ENCODE measurements at regions of chr1 and their contacts with region 1.

Region 1: DNA sequence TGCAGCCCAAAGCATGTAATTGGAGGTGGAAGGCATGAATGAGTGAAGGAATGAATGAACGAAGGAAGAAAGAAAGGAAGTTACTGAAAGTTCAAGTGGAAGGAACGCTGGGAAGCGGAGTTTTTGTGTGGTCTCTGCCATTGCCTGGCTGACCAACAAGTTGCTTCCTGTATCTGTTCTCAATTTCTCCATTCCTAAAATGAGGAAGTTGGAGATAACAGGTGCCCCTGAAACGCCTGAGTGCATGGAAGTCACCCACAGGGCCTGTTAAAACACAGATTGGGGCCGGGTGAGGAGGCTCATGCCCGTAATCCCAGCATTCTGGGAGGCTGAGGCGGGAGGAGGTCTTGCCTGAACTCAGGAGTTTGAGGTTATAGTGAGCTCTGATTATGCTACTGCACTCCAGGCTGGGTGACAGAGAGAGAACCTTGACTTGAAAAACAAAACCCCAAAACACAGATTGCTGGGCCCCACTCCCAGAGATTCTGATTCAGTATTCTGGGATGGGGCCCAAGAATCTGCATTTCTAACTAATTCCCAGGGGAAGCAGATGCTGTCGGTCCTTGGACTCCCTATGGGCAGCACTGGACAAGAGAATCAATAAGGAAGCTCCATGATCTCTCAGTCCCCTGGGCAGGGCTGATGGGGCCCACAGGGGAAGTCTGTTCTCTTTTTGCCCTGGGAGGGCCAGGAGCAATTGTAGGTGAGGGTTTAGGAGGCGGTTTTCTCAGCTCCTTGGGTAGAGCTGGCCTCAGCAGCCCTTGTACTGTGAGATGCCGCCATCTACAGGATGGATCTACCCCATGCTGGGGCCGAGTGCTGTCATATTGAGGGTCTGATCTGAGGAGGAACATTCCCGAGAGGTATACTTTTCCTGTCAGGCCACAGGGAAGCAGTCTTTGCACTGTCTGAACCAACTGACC is 3.3 kb upstream of the CNR2 start:
- DNase-seq: peak; percentile 85
- H3K4me3 ChIP-seq: no peak overlapping the region
- H3K27ac ChIP-seq: no peak overlapping the region
- H3K4me1 ChIP-seq: peaks cover 0 to 6% of the 10 kb centered on the region in 2 experiments; a peak in 1 of 4 replicates
- H3K27me3 ChIP-seq: no peaks in the 10 kb centered on the region
- CTCF ChIP-seq: peak; percentile 62
- EP300 ChIP-seq: no peak
- RAD21 ChIP-seq: peak; percentile 93

Region 2: GRCh38 chr1:23777979-23778814 is 138.3 kb before region 1 on chr1 and contains the start of gene PITHD1:
- CTCF ChIA-PET with region 1: interaction called, 17 read pairs
- POLR2A ChIA-PET with region 1: interaction called, 6 read pairs
- DNase-seq: peak; percentile 97
- H3K4me3 ChIP-seq: peak within 1 kb of the TSS; percentile 72 to 86
- H3K27ac ChIP-seq: peak within 1 kb of the TSS; percentile 81 to 90
- H3K4me1 ChIP-seq: peaks cover 12 to 21% of the 10 kb centered on the region in 2 experiments; a peak in 3 of 4 replicates
- H3K27me3 ChIP-seq: no peaks in the 10 kb centered on the region
- CTCF ChIP-seq: no peak
- EP300 ChIP-seq: no peak
- RAD21 ChIP-seq: no peak
- polyA plus RNA-seq, gene PITHD1: 36.3 and 41.8 TPM in 2 replicates

Region 3: DNA sequence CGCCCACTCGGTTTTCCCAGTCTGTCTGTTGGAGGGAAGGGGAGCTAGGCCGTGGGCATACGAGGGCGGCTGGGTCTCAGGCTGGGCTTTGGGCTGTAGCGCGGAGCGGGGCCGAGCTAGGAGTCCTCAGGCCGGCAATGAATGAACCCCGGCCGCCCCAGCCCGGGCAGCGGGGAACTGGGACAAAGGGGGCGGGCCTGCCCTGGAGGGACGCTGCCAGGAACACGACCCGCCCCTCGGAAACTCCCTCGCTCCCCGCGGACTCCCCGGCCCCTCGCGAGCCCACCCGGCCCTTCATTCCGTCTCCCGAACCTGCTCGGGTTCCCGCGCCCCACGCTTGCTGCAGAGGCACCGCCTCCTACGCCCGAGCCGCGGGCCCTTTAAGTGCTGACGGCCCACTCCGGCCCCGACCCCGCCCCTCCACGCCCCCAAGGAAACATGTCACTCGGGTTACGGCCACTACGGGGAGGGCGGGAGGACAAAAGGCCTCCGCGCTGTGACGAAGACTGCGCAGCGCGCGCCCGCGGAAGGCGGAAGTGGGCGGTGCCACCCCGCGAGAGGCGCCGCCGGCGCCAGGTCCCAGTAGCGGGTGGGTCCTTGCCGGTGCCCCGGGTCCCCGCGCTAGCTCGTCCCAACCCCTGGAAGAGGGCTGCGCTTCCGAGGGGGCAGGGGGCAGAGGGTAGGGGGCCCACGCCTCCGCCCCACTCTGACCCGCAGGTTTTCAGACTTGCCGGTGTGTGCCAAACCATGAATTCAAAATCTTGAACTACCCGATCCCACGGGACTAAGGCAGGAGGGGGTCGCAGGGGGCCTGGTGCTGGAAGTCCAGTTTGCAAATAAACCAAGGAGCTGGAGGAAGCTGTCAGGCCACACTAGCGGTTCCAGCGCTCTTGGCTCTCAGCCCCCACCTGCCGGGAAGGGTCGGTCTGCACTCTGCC is 115.8 kb before region 1 on chr1 and contains the start of gene GALE:
- CTCF ChIA-PET with region 1: interaction called, 26 read pairs
- POLR2A ChIA-PET with region 1: interaction called, 3 read pairs
- DNase-seq: peak; percentile 99
- H3K4me3 ChIP-seq: peak within 1 kb of the TSS; percentile 71 to 89
- H3K27ac ChIP-seq: peak within 1 kb of the TSS; percentile 73 to 89
- H3K4me1 ChIP-seq: peaks cover 5 to 30% of the 10 kb centered on the region in 2 experiments; a peak in 1 of 4 replicates
- H3K27me3 ChIP-seq: no peaks in the 10 kb centered on the region
- CTCF ChIP-seq: no peak
- EP300 ChIP-seq: 0 out of 4 replicates have a peak, but pooled peaks of 1 of the 2 experiments have one; percentile 9
- RAD21 ChIP-seq: no peak
- polyA plus RNA-seq, gene GALE: 71.7 and 76.0 TPM in 2 replicates

Region 4: GRCh38 chr1:23816906-23817305 is 99.6 kb before region 1 on chr1:
- CTCF ChIA-PET with region 1: interaction called, 41 read pairs
- POLR2A ChIA-PET with region 1: no interaction called
- DNase-seq: no peak
- H3K4me3 ChIP-seq: no peak overlapping the region
- H3K27ac ChIP-seq: no peak overlapping the region
- H3K4me1 ChIP-seq: no peaks in the 10 kb centered on the region
- H3K27me3 ChIP-seq: no peaks in the 10 kb centered on the region
- CTCF ChIP-seq: no peak
- EP300 ChIP-seq: no peak
- RAD21 ChIP-seq: no peak

Region 5: GRCh38 chr1:23957096-23957495 is 40.6 kb after region 1 on chr1:
- CTCF ChIA-PET with region 1: interaction called, 11 read pairs
- POLR2A ChIA-PET with region 1: no interaction called
- DNase-seq: peak; percentile 65
- H3K4me3 ChIP-seq: no peak overlapping the region
- H3K27ac ChIP-seq: peak overlapping the region in 1 of 2 experiments; percentile 55; a peak in 2 of 4 replicates
- H3K4me1 ChIP-seq: peaks cover 9 to 12% of the 10 kb centered on the region in 2 experiments; a peak in 3 of 4 replicates
- H3K27me3 ChIP-seq: no peaks in the 10 kb centered on the region
- CTCF ChIP-seq: no peak
- EP300 ChIP-seq: no peak
- RAD21 ChIP-seq: no peak